ENCODE measurements at regions of chr18 and their contacts with region 1.

Region 1: GRCh38 chr18:49561289-49562193 is at the start of gene LIPG:
- DNase-seq: peak; percentile 22
- H3K4me3 Mint-ChIP-seq: peak within 1 kb of the TSS; percentile 66
- H3K27ac Mint-ChIP-seq: no peak within 1 kb of the TSS
- H3K4me1 Mint-ChIP-seq: peaks cover 33% of the 10 kb centered on the region
- H3K27me3 Mint-ChIP-seq: peaks cover 80% of the 10 kb centered on the region
- total RNA-seq, gene LIPG: 0.29 and 0.88 TPM in 2 replicates

Region 2: GRCh38 chr18:49486953-49487710 is 74.4 kb before region 1 on chr18 and contains the start of gene C18orf32:
- intact Hi-C with region 1: loop called (anchors 1 kb)
- DNase-seq: peak; percentile 92
- H3K4me3 Mint-ChIP-seq: peak within 1 kb of the TSS; percentile 93
- H3K27ac Mint-ChIP-seq: peak within 1 kb of the TSS; percentile 98
- H3K4me1 Mint-ChIP-seq: peaks cover 53% of the 10 kb centered on the region
- H3K27me3 Mint-ChIP-seq: no peaks in the 10 kb centered on the region
- total RNA-seq, gene C18orf32: 28.7 and 31.2 TPM in 2 replicates

Region 3: GRCh38 chr18:49510393-49511115 is 51.0 kb before region 1 on chr18:
- intact Hi-C with region 1: loop called (anchors 2 kb)
- DNase-seq: peak; percentile 24
- H3K4me3 Mint-ChIP-seq: no peak overlapping the region
- H3K27ac Mint-ChIP-seq: no peak overlapping the region
- H3K4me1 Mint-ChIP-seq: peaks cover 5% of the 10 kb centered on the region
- H3K27me3 Mint-ChIP-seq: peaks cover 17% of the 10 kb centered on the region

Region 4: DNA sequence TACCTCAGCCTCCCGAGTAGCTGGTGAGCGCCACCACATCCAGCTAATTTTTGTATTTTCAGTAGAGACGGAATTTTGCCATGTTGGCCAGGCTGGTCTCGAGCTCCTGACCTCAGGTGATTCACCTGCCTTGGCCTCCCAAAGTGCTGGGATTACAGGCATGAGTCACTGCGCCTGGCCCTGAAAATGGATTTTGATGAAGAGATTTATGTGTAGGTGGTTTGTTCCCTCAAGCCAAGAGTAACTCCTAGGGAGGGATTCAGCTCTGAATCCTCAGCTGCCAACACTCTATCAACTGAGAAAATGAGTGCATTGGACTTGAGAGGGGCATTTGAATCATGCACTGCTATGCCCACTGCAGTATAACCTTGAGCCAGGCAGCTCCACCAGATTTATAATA is 17.2 kb before region 1 on chr18:
- intact Hi-C with region 1: no loop called
- DNase-seq: no peak
- H3K4me3 Mint-ChIP-seq: no peak overlapping the region
- H3K27ac Mint-ChIP-seq: no peak overlapping the region
- H3K4me1 Mint-ChIP-seq: no peaks in the 10 kb centered on the region
- H3K27me3 Mint-ChIP-seq: peaks cover 13% of the 10 kb centered on the region

Region 5: GRCh38 chr18:49728542-49728941 is 167.0 kb after region 1 on chr18:
- intact Hi-C with region 1: loop called (anchors 2 kb)
- DNase-seq: peak; percentile 12
- H3K4me3 Mint-ChIP-seq: no peak overlapping the region
- H3K27ac Mint-ChIP-seq: no peak overlapping the region
- H3K4me1 Mint-ChIP-seq: peaks cover 6% of the 10 kb centered on the region
- H3K27me3 Mint-ChIP-seq: peaks cover 11% of the 10 kb centered on the region

Region 6: DNA sequence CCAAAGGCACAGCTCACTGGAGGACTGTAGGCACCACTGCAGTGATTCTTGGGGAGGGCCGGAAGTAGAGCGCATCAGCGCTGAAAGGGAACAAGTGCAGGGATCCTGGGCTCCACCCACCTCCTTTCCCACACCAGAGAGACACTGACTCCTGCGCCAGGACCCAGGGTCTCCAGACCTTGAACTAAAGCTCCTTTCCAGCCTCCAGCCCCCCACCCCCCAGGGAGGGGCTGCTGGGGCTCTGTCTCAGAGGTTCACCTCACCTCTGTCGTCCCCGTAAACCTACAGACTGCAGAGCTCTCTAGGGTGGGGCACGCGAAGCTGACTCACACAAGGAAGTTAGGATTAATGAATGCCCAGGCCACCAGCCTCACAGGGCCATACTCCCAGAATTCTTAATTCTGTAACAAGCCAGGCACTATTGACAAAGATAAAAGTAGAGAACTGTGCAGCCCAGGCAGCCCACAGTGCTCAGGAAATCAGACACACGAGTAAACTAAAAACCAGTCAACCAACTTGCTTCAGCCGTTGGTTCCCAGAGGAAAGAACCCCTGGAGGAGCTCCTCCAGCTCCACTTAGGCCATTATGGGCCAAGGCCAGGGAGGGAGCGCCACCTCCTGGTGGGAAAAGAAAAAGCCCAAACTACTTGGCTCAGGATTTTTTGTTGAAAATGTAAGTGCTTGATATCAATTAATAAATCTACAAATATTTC is 296.9 kb after region 1 on chr18:
- intact Hi-C with region 1: loop called (anchors 1 kb)
- DNase-seq: peak; percentile 38
- H3K4me3 Mint-ChIP-seq: no peak overlapping the region
- H3K27ac Mint-ChIP-seq: no peak overlapping the region
- H3K4me1 Mint-ChIP-seq: peaks cover 4% of the 10 kb centered on the region
- H3K27me3 Mint-ChIP-seq: no peaks in the 10 kb centered on the region

Region 7: GRCh38 chr18:50194631-50195532 is 633.3 kb after region 1 on chr18 and contains the start of gene MYO5B:
- intact Hi-C with region 1: loop called (anchors 10 kb)
- DNase-seq: peak; percentile 24
- H3K4me3 Mint-ChIP-seq: peak within 1 kb of the TSS; percentile 62
- H3K27ac Mint-ChIP-seq: no peak within 1 kb of the TSS
- H3K4me1 Mint-ChIP-seq: peaks cover 7% of the 10 kb centered on the region
- H3K27me3 Mint-ChIP-seq: peaks cover 62% of the 10 kb centered on the region
- total RNA-seq, gene MYO5B: 0.12 TPM in 1 of 2 replicates, not detected in the other

Measured in activated T-helper 1 cell treated with anti-CD3 and anti-CD28 coated beads, Interleukin-12 subunit alpha, Interleukin-12 subunit beta, Interleukin-2, Interleukin-4 antibody, amounts not matched to agents 30 ng/mL and 10 ng/mL and 1 ng/mL, durations not matched to agents 14 hours and 24 hours and 36 hours (primary cell).